AG04449 (cell line): ENCODE measurements at regions of chr7 and their contacts with region 1.

Region 1: GRCh38 chr7:131068604-131069021 is 259.1 kb upstream of the MKLN1 start:
- DNase-seq: no peak
- H3K4me3 ChIP-seq: no peak overlapping the region
- CTCF ChIP-seq: peak; percentile 23

Region 2: DNA sequence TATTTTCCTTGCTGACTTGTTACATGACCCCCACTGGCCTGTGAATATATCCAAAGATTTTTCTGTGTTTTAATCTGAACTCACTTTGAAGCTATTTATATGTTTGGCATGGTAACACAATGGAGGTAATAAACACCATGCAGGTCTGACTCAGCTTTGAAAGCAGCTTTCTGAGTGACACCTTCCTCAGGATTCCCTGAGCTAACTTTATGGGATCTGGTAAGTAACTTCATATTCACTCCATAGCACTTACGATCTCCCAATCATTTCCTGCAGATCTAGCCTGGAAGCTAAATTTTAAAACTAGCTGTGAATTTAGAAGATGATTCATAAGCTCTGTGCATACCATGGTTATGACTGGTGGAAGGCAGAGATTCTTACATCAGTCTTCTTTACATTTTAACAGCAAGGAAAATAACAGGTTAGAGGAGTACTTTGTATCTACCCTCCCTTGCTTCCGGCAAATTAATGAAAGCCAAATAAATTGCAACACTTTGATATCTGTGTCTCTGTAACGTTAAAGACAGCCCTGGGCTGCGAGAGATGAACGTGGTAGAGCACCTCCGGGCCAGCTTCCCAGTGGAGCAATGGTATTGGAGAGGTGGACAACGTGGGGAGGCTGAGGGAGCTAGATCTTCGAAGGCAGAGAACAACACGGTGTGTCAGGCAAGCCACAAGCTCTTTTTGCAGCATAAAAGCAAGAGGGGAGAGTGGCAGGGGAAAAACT is 164.4 kb before region 1 on chr7:
- CTCF ChIA-PET with region 1: interaction called, 11 read pairs
- POLR2A ChIA-PET with region 1: no interaction called
- DNase-seq: peak; percentile 91
- H3K4me3 ChIP-seq: peak overlapping the region; percentile 36
- CTCF ChIP-seq: no peak

Region 3: DNA sequence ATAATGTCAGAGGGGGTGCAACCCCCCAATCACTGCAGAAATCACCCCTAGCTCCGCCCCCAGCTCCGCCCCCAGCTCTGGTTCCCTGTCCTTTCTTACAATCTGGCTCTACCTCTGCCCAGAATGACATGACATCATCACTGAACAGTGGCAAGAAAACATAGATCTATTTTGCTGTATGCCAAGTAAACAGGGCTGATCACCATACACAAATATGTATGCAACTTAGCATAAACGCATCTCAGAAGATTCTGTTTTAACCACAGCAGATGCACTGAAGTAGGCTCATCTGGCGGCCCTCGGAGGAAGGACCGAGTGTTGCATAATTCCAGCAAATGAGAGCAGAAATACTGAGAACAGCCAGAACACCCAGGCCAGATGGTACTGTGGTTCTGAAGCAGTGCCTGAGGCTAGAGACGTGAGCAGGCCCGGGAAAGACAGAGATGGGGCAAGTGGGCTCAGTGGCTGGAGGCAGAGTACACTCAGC is 41.3 kb before region 1 on chr7:
- CTCF ChIA-PET with region 1: no interaction called
- POLR2A ChIA-PET with region 1: no interaction called
- DNase-seq: peak; percentile 72
- H3K4me3 ChIP-seq: no peak overlapping the region
- CTCF ChIP-seq: no peak

Region 4: GRCh38 chr7:131057015-131057793 is 11.4 kb before region 1 on chr7:
- CTCF ChIA-PET with region 1: interaction called, 42 read pairs
- POLR2A ChIA-PET with region 1: no interaction called
- DNase-seq: peak; percentile 56
- H3K4me3 ChIP-seq: no peak overlapping the region
- CTCF ChIP-seq: no peak

Region 5: GRCh38 chr7:131105799-131106680 is 37.4 kb after region 1 on chr7:
- CTCF ChIA-PET with region 1: interaction called, 12 read pairs
- POLR2A ChIA-PET with region 1: no interaction called
- DNase-seq: no peak
- H3K4me3 ChIP-seq: peak overlapping the region; percentile 85
- CTCF ChIP-seq: no peak

Region 6: GRCh38 chr7:131244259-131244852 is 175.7 kb after region 1 on chr7:
- CTCF ChIA-PET with region 1: no interaction called
- POLR2A ChIA-PET with region 1: no interaction called
- DNase-seq: peak; percentile 81
- H3K4me3 ChIP-seq: no peak overlapping the region
- CTCF ChIP-seq: no peak

Region 7: DNA sequence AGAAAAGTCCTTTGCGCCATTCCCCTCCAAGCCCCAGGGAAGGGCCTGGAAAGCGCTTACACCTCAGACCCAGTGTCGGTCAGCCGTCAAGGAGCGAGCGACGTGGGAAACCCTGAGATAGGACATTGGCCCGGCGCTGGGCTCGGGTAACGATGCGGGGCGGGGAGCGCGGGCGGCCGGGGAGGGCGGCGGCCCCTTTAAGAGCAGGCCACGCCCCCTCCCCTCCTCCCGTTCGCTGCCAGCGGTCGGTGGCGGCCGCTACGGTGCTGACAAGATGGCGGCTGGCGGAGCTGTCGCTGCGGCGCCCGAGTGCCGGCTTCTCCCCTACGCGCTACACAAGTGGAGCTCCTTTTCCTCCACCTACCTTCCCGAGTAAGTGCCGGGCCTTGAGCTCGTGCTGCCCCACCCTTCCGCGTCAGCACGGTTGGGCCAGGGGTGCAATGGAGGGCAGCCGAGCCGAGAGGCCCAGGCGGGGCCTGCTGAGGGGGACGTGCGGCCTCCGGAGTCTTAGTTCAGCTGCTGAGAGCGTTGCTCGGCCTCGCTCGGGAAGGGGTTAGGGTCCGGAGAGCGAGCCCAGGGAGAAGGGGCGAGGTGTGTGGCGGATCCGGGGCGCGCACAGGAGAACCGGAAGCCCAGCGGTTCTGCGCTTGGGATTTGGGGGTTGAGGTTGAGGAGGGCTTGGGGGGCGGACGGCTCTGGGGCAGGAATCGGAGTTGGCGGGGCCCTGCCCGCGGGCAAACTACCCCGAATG is 259.2 kb after region 1 on chr7 and contains the start of gene MKLN1:
- CTCF ChIA-PET with region 1: interaction called, 18 read pairs
- POLR2A ChIA-PET with region 1: no interaction called
- DNase-seq: no peak
- H3K4me3 ChIP-seq: peak within 1 kb of the TSS; percentile 92
- CTCF ChIP-seq: no peak

Region 8: DNA sequence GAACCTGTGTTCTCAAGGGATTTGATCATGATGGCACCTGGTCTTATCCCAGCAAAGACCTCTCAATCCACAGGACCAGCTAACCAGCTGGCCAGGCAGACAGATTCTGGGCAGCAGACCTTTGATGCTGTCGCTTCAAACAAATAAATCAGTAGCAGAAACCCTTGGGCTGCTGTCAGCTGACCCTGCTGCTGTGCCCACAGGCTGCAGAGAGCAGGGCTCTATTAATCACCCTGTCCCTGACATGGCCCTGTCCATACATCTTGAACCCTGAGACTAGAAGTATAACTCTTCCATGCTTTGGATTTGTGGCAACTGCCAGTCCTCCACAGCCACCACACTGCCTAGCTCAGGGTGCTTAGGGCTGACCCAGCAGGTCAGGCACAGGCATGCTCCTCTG is 731.9 kb after region 1 on chr7:
- CTCF ChIA-PET with region 1: no interaction called
- POLR2A ChIA-PET with region 1: no interaction called
- DNase-seq: no peak
- H3K4me3 ChIP-seq: no peak overlapping the region
- CTCF ChIP-seq: no peak